ENCODE measurements at regions of chr12 and their contacts with region 1.

Region 1: GRCh38 chr12:13452955-13453570 is 256.5 kb downstream of the EMP1 start:
- DNase-seq: no peak
- H3K4me3 ChIP-seq: no peak overlapping the region
- H3K27ac ChIP-seq: no peak overlapping the region
- H3K4me1 ChIP-seq: no peaks in the 10 kb centered on the region
- H3K27me3 ChIP-seq: no peaks in the 10 kb centered on the region
- CTCF ChIP-seq: no peak
- POLR2A ChIP-seq: no peak

Region 2: DNA sequence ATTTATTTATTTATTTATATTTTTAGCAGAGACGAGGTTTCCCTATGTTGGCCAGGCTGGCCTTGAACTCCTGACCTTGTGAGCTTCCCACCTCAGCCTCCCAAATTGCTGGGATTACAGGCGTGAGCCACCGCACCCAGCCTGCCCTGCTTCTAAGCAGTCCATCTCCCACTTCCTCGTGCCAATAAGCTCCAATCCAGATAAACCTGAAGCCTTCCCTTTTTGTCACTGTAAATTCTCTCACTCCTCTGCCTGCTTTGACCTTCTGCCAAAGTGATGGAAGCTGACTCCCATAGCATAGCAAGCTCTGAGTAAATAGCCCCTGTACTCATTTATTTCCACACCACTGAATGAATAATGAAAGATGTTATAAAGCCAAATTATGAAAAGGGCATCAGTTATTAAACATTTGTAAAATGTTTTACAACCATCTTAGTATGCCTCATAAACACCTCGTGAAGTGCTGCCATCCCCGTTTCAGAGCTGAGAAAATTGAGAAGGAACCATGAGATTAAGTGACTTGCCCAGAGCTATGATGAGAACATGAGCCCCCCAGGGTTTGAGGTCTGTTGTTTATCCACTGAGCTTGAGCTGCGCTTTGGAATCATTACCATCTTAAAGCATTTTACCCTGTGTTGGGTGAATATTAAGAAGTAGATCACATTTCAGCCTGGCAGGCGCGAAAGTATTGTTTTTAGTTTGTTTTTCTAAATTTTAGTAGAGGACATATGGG is 1133.4 kb before region 1 on chr12:
- intact Hi-C with region 1: loop called (anchors 10 kb)
- DNase-seq: no peak
- H3K4me3 ChIP-seq: peak overlapping the region in 1 of 3 donors; percentile 15
- H3K27ac ChIP-seq: peak overlapping the region; percentile 58 to 80
- H3K4me1 ChIP-seq: no peaks in the 10 kb centered on the region
- H3K27me3 ChIP-seq: no peaks in the 10 kb centered on the region
- CTCF ChIP-seq: no peak
- POLR2A ChIP-seq: no peak